ENCODE measurements at regions of chr5 and their contacts with region 1.

Region 1: DNA sequence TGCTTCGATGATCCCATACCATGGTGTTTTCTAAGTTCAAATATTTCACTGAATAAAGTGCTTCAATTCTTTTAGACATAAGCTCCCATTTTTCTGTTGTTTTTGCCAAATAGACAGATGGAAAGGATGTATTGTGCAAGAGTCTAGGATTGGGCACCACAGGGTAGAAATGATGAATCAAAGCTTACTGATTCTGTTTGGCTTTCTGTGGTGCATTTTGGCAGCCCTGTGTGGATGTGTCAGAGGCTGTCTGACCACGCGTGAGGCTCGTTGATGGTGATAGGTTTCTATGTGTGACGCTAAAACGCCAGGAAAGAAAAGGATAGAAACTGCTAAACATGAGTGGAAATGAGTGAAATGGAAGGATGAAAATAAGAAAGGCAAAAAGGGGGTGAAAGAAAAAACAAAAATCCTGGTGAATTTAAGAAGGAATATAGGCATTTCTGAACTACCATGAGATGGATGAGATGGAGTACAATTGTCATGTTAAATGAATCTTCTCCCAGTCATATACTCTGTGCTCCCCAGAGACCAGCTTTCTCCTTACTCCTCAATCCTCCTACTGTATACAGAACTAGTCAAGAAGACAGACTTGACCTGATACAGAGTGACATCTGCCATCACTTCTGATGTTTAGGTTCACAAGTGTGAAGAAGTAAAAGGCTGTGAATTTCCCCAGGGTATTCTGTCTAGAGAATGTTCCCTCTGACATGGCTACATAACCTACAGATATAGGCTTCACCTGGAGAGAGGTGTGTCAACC is 54.4 kb downstream of the ANKH start:
- DNase-seq: no peak
- H3K4me3 ChIP-seq: no peak overlapping the region
- H3K27ac ChIP-seq: no peak overlapping the region
- H3K4me1 ChIP-seq: peaks cover 32% of the 10 kb centered on the region
- H3K27me3 ChIP-seq: no peaks in the 10 kb centered on the region
- CTCF ChIP-seq: no peak
- POLR2A ChIP-seq: no peak

Region 2: DNA sequence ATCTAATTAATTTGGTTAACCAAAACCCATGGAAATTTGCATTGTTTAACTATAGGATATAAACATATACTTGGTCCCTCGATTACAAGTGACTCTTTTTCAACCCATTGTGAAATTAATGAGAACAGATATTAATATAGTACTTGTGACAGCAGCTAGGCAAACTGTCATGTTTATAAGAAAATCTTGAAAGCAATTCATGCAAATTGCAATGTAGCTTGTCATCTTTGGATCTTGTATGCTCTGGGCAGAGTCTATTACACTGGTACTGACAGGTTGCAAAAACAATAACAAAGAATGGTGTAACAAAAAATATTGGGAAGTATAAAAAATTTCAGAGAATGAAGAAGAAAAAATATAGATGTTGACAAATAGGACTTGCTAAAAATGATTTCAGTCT is 1813.7 kb before region 1 on chr5:
- intact Hi-C with region 1: loop called (anchors 5 kb)
- DNase-seq: no peak
- H3K4me3 ChIP-seq: no peak overlapping the region
- H3K27ac ChIP-seq: no peak overlapping the region
- H3K4me1 ChIP-seq: no peaks in the 10 kb centered on the region
- H3K27me3 ChIP-seq: no peaks in the 10 kb centered on the region
- CTCF ChIP-seq: no peak
- POLR2A ChIP-seq: no peak

Region 3: GRCh38 chr5:14415024-14415697 is 402.0 kb before region 1 on chr5:
- intact Hi-C with region 1: no loop called
- DNase-seq: no peak
- H3K4me3 ChIP-seq: no peak overlapping the region
- H3K27ac ChIP-seq: peak overlapping the region; percentile 4
- H3K4me1 ChIP-seq: peaks cover 53% of the 10 kb centered on the region
- H3K27me3 ChIP-seq: no peaks in the 10 kb centered on the region
- CTCF ChIP-seq: no peak
- POLR2A ChIP-seq: no peak

Region 4: GRCh38 chr5:15406478-15406877 is 589.3 kb after region 1 on chr5:
- intact Hi-C with region 1: no loop called
- DNase-seq: no peak
- H3K4me3 ChIP-seq: no peak overlapping the region
- H3K27ac ChIP-seq: no peak overlapping the region
- H3K4me1 ChIP-seq: no peaks in the 10 kb centered on the region
- H3K27me3 ChIP-seq: no peaks in the 10 kb centered on the region
- CTCF ChIP-seq: no peak
- POLR2A ChIP-seq: no peak